Naive thymus-derived CD4-positive, alpha-beta T cell (primary cell): ENCODE measurements at regions of chr9 and their contacts with region 1.

Region 1: DNA sequence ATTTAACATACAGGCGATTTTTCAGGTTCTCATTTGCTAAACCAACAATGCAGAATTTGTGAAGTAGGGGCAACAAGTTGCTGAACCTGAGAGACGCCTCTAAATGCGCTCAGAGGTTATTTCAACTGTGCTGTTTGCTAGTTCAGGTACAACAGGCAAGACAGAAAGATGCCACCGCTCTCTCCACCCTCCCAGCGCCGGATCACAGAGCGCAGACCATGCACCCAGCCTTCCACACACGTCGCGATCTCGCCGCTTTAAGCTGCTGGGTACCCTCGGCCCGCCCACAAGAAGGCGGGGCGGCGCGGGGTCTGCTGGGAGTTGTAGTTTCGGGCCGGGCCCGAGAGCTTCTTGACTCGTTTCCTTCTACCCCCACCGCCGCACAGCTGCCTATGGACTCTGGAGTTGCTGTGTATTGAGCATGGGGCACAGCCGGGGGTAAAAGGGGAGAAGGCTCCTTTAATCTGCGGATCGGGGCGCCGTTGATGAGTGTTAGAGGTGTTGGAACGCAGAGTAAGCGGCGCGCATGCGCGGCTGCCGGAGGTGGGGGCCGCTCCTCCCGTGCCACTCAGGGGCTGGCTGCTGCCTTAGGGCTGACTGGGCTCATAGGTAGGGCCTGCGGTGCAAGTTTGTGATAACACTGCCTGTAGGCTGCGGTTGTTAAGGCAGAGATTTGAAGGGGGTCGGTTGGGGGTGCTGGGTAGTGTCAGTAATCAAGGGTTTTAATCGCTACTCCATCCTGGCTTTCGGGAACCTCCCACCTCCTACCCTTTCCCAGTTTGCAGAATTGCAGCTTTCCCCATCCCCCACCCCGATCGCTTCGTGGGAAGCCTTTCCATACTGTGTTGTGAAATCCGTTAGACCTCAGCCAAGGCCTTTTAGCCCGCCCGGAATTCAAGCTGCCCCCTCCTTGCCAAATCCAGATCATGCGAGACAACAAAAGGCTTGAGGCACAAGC is 40.3 kb upstream of the ABCA1 start:
- DNase-seq: peak; percentile 80 to 95 (median 91)
- ATAC-seq: peak; percentile 99
- H3K4me3 ChIP-seq: peak overlapping the region; percentile 85
- H3K4me3 Mint-ChIP-seq: peak overlapping the region; percentile 82 to 96 (median 94)
- H3K27ac ChIP-seq: peak overlapping the region; percentile 69
- H3K27ac Mint-ChIP-seq: peak overlapping the region; percentile 64 to 92 (median 86)
- H3K4me1 ChIP-seq: peaks cover 0 to 6% of the 10 kb centered on the region in 2 donors
- H3K4me1 Mint-ChIP-seq: peaks cover 12 to 25% (median 17%) of the 10 kb centered on the region in 7 donors
- H3K27me3 ChIP-seq: peaks cover 0 to 4% of the 10 kb centered on the region in 2 donors
- H3K27me3 Mint-ChIP-seq: peaks cover 0 to 30% (median 0%) of the 10 kb centered on the region in 5 donors

Region 2: DNA sequence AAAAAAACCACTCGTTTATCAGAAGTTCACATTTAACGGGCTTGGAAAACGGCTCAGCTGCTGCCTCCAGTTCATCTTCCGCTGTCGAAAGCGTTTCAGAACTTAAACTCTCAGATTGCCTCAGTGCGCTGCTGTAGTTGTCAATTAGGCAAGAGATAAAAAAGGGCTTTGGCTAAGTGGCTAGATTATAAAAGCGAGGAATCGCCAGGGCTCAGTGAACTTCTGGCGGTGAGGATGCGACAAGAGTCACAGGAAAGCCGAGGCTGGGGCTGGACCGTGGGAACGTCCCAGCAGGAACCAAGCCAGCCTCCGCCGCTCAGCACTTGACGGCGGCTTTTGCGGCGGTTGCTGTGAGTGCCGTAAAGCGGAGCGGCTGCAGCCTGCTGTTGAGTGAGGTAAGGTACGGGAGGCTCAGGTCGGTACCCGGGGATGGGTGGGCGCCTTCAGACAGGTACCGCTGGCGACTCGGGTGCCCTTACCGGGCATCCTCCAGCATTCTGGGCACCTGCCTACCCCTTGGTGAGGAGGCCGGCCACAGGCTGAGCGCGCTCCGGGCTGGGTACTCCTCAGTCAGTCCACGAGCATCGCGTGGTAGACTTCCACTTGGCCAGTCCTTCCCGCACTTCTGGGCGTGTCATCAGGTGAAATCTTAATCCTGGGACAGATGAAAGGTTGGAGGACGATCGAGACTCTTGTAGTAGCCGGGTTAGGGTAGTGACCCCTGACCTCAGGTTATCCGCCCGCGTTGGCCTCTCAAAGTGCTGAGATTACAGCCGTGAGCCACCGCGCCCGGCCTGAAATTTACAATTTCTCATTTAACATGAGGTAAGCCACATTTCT is 589.7 kb after region 1 on chr9 and contains the start of gene FKTN:
- CTCF ChIA-PET with region 1: no interaction called
- POLR2A ChIA-PET with region 1: no interaction called
- intact Hi-C with region 1: loop called in 1 of 2 experiments (anchors 2 kb)
- DNase-seq: peak; percentile 58 to 85 (median 83)
- ATAC-seq: peak; percentile 98
- H3K4me3 ChIP-seq: peak within 1 kb of the TSS; percentile 95
- H3K4me3 Mint-ChIP-seq: peak within 1 kb of the TSS; percentile 90 to 96 (median 94)
- H3K27ac ChIP-seq: peak within 1 kb of the TSS; percentile 61
- H3K27ac Mint-ChIP-seq: peak within 1 kb of the TSS; percentile 66 to 92 (median 86)
- H3K4me1 ChIP-seq: peaks cover 0 to 6% of the 10 kb centered on the region in 2 donors
- H3K4me1 Mint-ChIP-seq: peaks cover 11 to 37% (median 20%) of the 10 kb centered on the region in 7 donors
- H3K27me3 ChIP-seq: no peaks in the 10 kb centered on the region
- H3K27me3 Mint-ChIP-seq: no peaks in the 10 kb centered on the region
- total RNA-seq, gene FKTN: 8.0 to 15.5 (median 10.8) TPM

Region 3: DNA sequence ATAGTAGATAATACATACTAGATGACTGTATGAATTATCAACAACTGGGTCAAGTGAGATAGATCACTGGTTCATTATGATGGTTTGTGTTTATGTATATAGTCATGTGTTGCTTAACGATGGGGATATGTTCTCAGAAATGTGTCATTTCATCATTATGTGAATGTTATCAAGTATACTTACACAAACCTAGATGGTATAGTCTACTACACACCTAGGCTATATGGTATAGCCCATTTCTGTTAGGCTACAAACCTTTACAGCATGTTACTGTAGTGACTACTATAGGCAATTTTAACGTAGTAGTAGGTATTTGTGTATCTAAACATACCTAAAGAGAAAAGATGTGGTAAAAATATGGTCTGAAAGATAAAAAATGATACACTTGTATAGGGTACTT is 757.1 kb after region 1 on chr9:
- CTCF ChIA-PET with region 1: no interaction called
- POLR2A ChIA-PET with region 1: no interaction called
- intact Hi-C with region 1: no loop called
- DNase-seq: no peak
- ATAC-seq: no peak
- H3K4me3 ChIP-seq: no peak overlapping the region
- H3K4me3 Mint-ChIP-seq: no peak overlapping the region
- H3K27ac ChIP-seq: no peak overlapping the region
- H3K27ac Mint-ChIP-seq: peak overlapping the region in 1 of 9 donors; percentile 28
- H3K4me1 ChIP-seq: no peaks in the 10 kb centered on the region
- H3K4me1 Mint-ChIP-seq: peaks cover 0 to 8% (median 0%) of the 10 kb centered on the region in 7 donors
- H3K27me3 ChIP-seq: no peaks in the 10 kb centered on the region
- H3K27me3 Mint-ChIP-seq: no peaks in the 10 kb centered on the region